Activated naive CD4-positive, alpha-beta T cell treated with anti-CD3 and anti-CD28 coated beads for 36 hours (primary cell): ENCODE measurements at regions of chr5 and their contacts with region 1.

Region 1: DNA sequence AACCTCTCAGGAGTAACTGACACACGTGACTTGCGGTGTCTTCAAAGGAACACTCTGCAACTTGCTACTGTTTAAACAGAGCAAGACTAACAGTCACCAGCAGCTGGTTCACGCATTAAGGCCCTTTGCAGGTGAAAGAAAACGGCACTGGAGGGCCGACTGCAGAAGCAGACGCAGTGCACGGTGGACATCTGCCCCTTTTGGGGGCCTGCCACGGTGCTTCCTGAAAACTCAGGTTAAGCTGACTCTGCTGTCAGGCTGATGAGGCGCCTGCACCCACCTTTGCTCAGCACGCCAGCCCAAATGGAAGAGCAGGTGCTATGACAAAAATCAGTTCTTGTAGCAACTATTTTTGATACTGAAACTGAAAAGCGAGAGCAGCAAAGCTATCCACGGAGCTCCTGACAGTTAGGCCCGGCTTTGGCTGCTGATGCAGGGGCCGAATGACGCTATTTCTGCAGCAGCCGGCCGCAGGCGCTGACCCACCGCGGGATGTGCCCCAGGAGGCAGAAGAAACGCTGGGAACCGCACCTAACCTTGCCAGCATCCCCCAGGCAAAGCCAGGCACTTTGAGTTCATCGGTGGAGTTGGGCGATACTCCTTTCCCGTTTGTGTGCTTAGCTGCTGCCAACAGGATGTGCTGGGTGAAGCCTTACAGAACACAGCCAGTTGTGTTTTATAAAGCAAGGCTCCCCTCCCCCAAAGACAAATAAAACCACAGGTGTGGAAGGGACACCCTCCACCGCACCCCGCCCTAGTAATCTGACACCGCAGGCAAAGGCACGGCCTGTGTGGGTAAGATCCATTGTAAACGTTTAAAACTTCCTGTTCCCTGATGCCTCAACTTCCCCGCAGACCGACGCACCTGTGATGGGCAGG is 21.1 kb upstream of the TERT start:
- DNase-seq: peak; percentile 81
- H3K4me3 Mint-ChIP-seq: peak overlapping the region; percentile 58
- H3K27ac Mint-ChIP-seq: peak overlapping the region; percentile 92
- H3K4me1 Mint-ChIP-seq: peaks cover 60% of the 10 kb centered on the region
- H3K27me3 Mint-ChIP-seq: no peaks in the 10 kb centered on the region

Region 2: DNA sequence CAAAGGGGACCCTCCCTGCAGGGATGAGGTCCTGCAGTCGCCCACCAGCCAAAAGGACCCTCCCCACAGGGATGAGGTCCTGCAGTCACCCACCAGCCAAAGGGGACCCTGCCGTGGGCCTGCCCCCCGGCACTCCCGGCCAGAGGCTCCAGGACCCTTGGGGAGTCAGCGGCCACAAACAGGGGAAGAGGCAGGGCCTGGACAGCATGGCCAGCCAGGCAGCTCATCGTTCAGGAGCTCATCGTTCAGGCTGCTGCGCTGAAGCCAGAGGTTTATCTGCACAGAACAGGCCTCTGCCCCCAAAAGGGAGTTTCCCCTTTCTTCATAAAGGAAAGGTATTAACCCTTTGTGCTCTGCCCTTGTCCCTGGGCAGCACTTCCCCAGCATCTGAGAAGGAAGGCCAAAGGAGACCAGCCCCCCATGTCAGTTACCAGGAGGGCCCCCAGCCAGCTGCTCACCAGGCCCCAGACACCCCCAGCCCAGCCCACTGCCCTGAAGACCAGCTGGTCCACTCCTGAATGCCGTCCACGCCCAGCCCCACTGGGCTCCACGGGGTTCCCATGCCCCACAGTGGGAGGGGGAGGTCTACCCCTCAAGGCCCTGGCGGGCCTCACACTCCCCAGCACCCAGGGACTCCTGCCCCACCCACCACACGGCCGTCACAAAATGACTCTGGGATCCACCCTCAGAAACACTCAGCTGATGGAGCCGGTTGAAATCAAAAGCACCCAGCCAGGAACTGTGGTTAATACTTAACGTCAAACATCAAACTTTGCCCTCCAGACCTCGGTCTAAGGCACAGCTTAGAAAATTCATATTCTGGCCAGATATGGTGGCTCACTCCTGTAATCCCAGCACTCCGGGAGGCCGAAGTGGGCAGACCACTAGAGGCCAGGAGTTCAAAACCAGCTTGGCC is 210.3 kb before region 1 on chr5:
- CTCF ChIA-PET with region 1: interaction called, 3 read pairs
- intact Hi-C with region 1: loop called (anchors 5 kb)
- DNase-seq: peak; percentile 74
- H3K4me3 Mint-ChIP-seq: peak overlapping the region; percentile 38
- H3K27ac Mint-ChIP-seq: peak overlapping the region; percentile 85
- H3K4me1 Mint-ChIP-seq: peaks cover 73% of the 10 kb centered on the region
- H3K27me3 Mint-ChIP-seq: no peaks in the 10 kb centered on the region

Region 3: DNA sequence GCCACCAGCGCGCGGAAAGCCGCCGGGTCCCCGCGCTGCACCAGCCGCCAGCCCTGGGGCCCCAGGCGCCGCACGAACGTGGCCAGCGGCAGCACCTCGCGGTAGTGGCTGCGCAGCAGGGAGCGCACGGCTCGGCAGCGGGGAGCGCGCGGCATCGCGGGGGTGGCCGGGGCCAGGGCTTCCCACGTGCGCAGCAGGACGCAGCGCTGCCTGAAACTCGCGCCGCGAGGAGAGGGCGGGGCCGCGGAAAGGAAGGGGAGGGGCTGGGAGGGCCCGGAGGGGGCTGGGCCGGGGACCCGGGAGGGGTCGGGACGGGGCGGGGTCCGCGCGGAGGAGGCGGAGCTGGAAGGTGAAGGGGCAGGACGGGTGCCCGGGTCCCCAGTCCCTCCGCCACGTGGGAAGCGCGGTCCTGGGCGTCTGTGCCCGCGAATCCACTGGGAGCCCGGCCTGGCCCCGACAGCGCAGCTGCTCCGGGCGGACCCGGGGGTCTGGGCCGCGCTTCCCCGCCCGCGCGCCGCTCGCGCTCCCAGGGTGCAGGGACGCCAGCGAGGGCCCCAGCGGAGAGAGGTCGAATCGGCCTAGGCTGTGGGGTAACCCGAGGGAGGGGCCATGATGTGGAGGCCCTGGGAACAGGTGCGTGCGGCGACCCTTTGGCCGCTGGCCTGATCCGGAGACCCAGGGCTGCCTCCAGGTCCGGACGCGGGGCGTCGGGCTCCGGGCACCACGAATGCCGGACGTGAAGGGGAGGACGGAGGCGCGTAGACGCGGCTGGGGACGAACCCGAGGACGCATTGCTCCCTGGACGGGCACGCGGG is 20.9 kb before region 1 on chr5 and contains the start of gene TERT:
- CTCF ChIA-PET with region 1: interaction called, 3 read pairs
- intact Hi-C with region 1: loop called (anchors 1 kb)
- DNase-seq: peak; percentile 81
- H3K4me3 Mint-ChIP-seq: peak within 1 kb of the TSS; percentile 58
- H3K27ac Mint-ChIP-seq: no peak within 1 kb of the TSS
- H3K4me1 Mint-ChIP-seq: peaks cover 18% of the 10 kb centered on the region
- H3K27me3 Mint-ChIP-seq: no peaks in the 10 kb centered on the region
- total RNA-seq, gene TERT: 10.1 to 13.1 TPM

Region 4: GRCh38 chr5:1385395-1386273 is 69.7 kb after region 1 on chr5:
- CTCF ChIA-PET with region 1: no interaction called
- intact Hi-C with region 1: loop called (anchors 5 kb)
- DNase-seq: peak; percentile 85
- H3K4me3 Mint-ChIP-seq: peak overlapping the region; percentile 90
- H3K27ac Mint-ChIP-seq: peak overlapping the region; percentile 89
- H3K4me1 Mint-ChIP-seq: peaks cover 15% of the 10 kb centered on the region
- H3K27me3 Mint-ChIP-seq: no peaks in the 10 kb centered on the region